ENCODE measurements at regions of chr4 and their contacts with region 1.

Region 1: GRCh38 chr4:78864405-78865024 is 74.7 kb downstream of the PAQR3 start:
- DNase-seq: peak in 1 of 2 donors; percentile 88
- H3K4me3 ChIP-seq: no peak overlapping the region
- H3K27ac ChIP-seq: no peak overlapping the region
- H3K4me1 ChIP-seq: peaks cover 0 to 10% (median 0%) of the 10 kb centered on the region in 4 donors
- H3K27me3 ChIP-seq: no peaks in the 10 kb centered on the region
- CTCF ChIP-seq: peak in 5 of 7 experiments; percentile 63 to 85 (median 71)
- EP300 ChIP-seq: no peak
- POLR2A ChIP-seq: no peak

Region 2: DNA sequence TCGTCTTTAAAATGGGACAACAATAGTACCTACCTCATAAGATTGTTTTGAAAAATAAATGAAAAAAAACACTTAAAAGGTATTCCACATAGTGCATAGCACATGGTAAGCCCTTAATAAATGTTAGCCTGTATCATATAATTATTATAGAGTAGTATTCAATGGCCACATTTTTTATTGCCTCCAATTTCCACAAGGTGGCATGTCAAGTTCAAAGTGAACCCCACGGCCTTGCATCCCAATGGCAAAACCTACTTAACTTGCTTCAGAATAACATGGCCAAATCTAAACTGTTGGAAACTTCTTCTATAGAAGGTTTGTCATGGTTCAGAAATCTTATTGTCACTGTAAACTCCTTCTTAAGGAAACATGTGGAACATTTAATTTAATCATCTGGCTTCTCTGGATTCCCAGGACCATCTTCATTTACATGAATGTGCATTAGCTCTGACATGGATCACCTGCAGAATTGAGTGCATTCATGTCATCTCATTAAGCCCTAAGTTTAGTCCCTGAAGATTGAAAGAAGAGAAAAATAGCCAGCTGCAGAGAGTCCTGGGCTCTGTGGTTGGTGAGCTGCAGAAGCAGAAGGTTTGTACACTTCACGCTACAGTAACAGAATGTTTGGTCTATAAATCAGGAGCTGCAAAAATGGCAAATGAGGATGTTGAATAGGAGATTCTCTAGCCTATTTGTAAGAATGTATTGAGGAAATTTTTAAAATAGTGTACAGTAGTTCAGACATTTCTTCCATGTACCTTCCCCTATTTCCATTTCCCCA is 251.9 kb before region 1 on chr4:
- intact Hi-C with region 1: loop called (anchors 10 kb)
- DNase-seq: peak in 1 of 2 donors; percentile 75
- H3K4me3 ChIP-seq: no peak overlapping the region
- H3K27ac ChIP-seq: no peak overlapping the region
- H3K4me1 ChIP-seq: peaks cover 0 to 12% (median 0%) of the 10 kb centered on the region in 4 donors
- H3K27me3 ChIP-seq: no peaks in the 10 kb centered on the region
- CTCF ChIP-seq: peak in 5 of 7 experiments; percentile 30 to 64 (median 43)
- EP300 ChIP-seq: no peak
- POLR2A ChIP-seq: no peak

Measured in stomach (tissue), 19 donors.